ENCODE measurements at regions of chr19 and their contacts with region 1.

Region 1: GRCh38 chr19:11137542-11138384 is 17.8 kb downstream of the SPC24 start:
- DNase-seq: peak; percentile 61 to 88 (median 80)
- H3K4me3 ChIP-seq: peak overlapping the region; percentile 29 to 70 (median 54)
- H3K27ac ChIP-seq: peak overlapping the region; percentile 53 to 95 (median 87)
- H3K27me3 ChIP-seq: no peaks in the 10 kb centered on the region
- CTCF ChIP-seq: peak; percentile 69 to 96 (median 88)

Region 2: GRCh38 chr19:11090054-11090900 is 47.5 kb before region 1 on chr19:
- intact Hi-C with region 1: no loop called
- DNase-seq: peak; percentile 94 to 99 (median 98)
- H3K4me3 ChIP-seq: peak overlapping the region; percentile 55 to 99 (median 86)
- H3K27ac ChIP-seq: peak overlapping the region; percentile 83 to 99 (median 98)
- H3K27me3 ChIP-seq: no peaks in the 10 kb centered on the region
- CTCF ChIP-seq: peak in 14 of 56 donors; percentile 2 to 42 (median 12)

Region 3: DNA sequence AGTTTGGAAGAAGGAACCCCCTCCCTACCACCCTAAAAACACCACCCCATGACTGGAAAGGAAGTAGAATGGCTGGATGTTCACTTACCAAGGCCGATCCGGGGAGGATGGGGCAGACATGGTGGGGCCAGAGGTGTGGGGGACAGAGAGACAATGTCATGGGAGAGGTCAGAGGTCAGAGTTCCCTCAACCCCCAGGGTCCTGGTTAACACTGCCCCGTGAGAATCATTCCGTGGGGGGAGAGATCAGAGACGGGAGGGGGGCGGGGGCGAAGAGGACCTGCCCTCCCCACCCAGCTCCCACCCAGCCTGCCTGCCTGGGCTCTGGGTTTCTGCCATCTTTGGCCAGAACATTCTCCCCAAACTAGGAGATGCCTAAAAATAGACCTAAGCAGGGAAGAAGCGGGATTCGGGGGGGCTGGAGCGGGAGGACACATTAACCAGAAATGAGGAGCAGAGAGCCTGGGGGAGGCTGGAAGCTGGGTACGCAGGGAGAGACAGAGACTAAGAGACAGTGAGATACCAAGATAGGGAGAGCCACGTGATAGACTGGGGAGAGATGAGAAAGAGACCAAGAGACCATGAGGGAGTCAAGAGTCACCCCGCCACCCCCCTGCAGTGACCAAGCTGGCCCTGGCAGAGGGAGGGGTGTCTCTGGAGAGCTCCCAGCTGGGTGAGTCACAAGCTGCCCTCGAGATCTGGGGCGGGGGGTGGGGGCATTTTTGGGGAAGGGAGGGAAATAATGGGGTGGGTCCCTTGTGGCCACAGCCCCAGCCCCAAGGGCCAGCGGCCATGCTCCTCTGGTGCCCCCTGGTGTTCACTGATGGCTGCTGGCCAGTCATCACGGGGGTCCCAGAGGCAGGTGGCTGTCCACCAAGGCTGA is 65.7 kb after region 1 on chr19:
- intact Hi-C with region 1: loop called (anchors 1 to 2 kb)
- DNase-seq: peak in 9 of 10 donors; percentile 9 to 70 (median 60)
- H3K4me3 ChIP-seq: peak overlapping the region in 39 of 59 donors; percentile 3 to 51 (median 28)
- H3K27ac ChIP-seq: peak overlapping the region in 58 of 59 donors; percentile 23 to 92 (median 78)
- H3K27me3 ChIP-seq: no peaks in the 10 kb centered on the region
- CTCF ChIP-seq: peak; percentile 70 to 97 (median 86)

Region 4: DNA sequence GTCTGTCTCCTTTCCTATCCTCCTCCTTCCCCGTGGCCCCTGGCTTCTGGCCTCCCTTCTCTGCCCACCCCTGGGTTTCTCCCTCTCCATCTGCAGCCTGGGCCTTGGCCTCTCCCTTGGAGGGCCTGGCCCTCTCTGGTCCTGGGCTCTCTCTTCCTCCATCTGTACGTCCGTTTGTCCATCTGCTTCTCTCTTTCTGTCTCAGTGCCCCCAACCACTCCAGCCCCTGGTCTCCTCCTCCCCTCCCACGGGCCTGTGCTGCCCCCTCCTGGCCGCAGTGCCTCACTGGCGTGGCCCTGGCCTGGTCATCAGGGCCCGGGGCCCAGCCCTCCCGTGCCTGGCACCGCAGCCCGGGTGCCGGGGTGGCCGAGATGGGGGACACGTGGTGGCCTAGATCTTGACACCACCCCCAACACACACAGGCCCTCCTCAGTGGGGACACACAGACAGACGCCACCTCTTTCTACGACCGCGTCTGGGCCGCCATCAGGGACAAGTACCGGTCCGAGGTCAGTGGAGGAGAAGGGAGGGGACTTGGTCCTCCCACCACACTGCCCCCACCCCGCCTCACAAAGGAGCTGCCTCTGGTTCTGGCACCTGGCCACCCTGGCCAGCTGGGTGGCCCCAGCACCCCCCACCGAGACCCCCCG is 309.0 kb after region 1 on chr19:
- intact Hi-C with region 1: loop called in 1 of 2 experiments (anchors 10 kb)
- DNase-seq: peak; percentile 71 to 92 (median 84)
- H3K4me3 ChIP-seq: peak overlapping the region in 56 of 59 donors; percentile 15 to 72 (median 50)
- H3K27ac ChIP-seq: peak overlapping the region; percentile 7 to 100 (median 95)
- H3K27me3 ChIP-seq: no peaks in the 10 kb centered on the region
- CTCF ChIP-seq: peak; percentile 51 to 94 (median 86)

Region 5: DNA sequence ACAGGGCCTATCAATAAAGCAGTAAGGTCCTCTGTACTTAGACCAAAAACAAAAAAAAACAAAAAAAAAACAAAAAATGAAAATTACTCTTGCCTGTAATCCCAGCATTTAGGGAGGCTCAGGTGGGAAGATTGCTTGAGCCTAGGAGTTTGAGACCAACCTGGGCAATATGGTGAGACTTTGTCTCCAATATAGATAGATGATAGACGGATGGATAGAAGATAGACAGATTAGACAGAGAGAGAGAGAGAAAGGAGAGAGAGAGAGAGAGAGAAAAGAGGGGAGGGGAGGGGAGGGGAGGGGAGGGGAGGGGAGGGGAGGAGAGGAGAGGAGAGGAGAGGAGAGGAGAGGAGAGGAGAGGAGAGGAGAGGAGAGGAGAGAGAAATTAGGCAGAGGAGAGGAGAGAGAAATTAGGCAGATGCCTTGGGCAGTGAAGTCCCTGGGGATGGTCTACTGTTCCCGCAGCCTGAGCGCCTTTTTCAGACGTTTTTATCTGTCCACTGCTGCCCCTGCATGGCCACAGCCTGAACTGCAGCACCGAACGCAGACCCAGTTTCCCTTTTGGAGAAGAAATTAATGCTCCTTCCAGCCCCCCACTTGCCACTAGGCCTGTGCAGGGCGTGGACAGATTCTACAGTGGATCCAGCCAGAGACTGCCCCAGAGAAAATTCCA is 449.7 kb after region 1 on chr19:
- intact Hi-C with region 1: loop called in 1 of 2 experiments (anchors 10 kb)
- DNase-seq: peak; percentile 65 to 86 (median 76)
- H3K4me3 ChIP-seq: peak overlapping the region in 4 of 59 donors; percentile 5 to 18 (median 9)
- H3K27ac ChIP-seq: peak overlapping the region in 15 of 59 donors; percentile 9 to 68 (median 40)
- H3K27me3 ChIP-seq: no peaks in the 10 kb centered on the region
- CTCF ChIP-seq: peak; percentile 66 to 91 (median 85)